Activated CD4-positive, alpha-beta memory T cell treated with anti-CD3 and anti-CD28 coated beads, Interleukin-2, amount 10 ng/mL, durations not matched to agents 7 days and 5 days (primary cell): ENCODE measurements at regions of chr1 and their contacts with region 1.

Region 1: DNA sequence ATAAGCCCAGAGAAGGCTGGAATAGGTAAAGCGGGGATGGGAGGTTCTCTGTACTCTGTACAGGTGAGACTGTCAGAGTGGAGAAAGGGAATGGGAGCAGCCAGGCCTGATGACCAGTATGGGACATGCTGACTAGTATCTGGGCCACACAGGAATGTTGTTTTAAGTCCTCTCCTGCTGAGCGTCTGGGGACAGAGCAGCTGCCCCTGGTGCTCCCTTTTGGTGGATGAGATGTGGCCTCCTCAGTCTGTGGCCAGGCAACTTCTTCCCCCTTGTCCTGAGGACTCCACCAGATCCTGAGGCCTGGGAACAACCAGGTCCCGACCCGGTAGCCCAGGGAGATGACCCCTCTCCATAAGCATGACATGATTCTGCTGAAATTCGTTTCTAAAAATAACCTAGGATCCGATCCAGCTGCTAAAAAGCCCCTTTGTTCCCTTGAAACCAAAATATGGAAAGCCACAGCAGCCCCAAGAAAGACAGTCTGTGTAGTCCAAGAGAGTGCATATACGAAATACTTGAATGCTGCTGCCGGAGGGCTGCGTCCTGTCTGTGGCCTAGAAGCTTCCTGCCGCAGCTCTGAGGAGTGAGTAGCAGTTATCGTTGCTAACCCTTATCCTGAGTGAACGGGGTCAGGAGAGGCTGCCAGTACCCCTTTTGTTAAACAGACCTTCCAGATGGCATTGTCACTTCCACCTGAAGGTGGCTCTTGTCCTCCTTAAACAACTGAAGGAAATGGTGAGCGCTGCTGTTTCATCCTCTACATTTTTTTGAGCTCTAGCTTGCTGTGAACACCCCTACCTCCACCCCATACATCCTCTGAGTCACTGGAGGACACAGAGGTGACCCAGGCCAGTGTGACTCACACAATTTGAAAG is 47.2 kb downstream of the ATP2B4 start:
- DNase-seq: peak; percentile 80
- H3K4me3 Mint-ChIP-seq: peak overlapping the region; percentile 69
- H3K27ac Mint-ChIP-seq: peak overlapping the region; percentile 97
- H3K4me1 Mint-ChIP-seq: peaks cover 75% of the 10 kb centered on the region
- H3K27me3 Mint-ChIP-seq: no peaks in the 10 kb centered on the region

Region 2: DNA sequence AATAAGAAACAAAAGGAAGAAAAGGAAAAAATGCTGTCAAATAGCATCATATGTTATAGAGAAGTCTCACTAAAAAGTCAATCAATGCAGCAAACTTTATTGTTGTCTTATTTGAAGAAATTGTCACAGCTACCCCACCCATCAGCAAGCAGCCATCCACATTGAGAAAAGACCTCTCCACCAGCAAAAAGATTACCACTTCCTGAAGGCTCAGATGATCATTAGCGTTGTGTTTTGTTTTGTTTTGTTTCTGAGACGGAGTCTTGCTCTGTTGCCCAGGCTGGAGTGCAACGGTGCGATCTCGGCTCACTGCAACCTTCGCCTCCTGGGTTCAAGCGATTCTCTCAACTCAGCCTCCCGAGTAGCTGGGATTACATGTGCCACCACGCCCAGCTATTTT is 18.1 kb before region 1 on chr1:
- CTCF ChIA-PET with region 1: interaction called, 34 read pairs
- POLR2A ChIA-PET with region 1: interaction called, 64 read pairs
- DNase-seq: no peak
- H3K4me3 Mint-ChIP-seq: peak overlapping the region; percentile 44
- H3K27ac Mint-ChIP-seq: peak overlapping the region; percentile 77
- H3K4me1 Mint-ChIP-seq: peaks cover 71% of the 10 kb centered on the region
- H3K27me3 Mint-ChIP-seq: no peaks in the 10 kb centered on the region

Region 3: DNA sequence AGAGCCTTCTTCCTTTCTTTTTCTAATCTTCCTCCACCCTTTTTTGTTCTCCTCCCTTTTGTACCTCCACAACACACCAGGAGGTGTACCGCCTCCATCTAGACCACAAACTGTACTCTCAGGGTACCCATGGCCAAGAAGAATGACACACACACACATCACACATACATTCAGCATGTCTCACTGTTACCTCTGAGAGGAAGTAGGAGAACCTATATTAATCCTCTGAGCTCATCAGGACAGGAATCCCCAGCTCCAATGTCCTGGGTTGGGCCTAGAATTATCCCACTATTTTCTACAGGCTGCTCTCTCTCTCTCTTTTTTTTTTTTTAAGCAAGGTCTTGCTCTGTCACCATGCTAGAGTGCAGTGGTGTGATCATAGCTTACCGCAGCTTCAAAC is 10.5 kb before region 1 on chr1:
- CTCF ChIA-PET with region 1: interaction called, 25 read pairs
- POLR2A ChIA-PET with region 1: interaction called, 10 read pairs
- DNase-seq: no peak
- H3K4me3 Mint-ChIP-seq: no peak overlapping the region
- H3K27ac Mint-ChIP-seq: peak overlapping the region; percentile 72
- H3K4me1 Mint-ChIP-seq: peaks cover 68% of the 10 kb centered on the region
- H3K27me3 Mint-ChIP-seq: no peaks in the 10 kb centered on the region

Region 4: DNA sequence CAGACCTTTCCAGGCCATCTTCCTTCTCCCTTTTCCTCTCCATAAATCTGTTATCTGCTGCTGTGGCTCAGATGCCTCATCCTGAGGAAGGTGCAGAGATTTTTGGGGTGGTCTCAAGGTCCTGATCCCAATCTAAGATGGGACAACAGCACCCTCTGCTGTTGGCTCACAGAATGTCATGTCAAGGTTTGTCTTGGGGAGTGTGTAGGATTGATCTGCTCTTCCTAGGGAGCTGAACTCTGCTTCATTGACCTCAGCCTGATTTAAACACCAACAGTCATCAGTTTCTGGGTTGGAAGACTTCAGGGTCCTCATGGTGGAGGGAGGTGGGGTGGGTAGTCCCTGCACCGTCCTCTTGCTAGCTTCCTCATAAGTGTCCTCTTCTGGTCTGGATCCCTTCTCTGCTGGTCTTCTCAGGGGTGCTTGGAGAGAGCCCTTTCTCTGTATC is 28.4 kb after region 1 on chr1:
- CTCF ChIA-PET with region 1: interaction called, 23 read pairs
- POLR2A ChIA-PET with region 1: interaction called, 5 read pairs
- DNase-seq: peak; percentile 65
- H3K4me3 Mint-ChIP-seq: no peak overlapping the region
- H3K27ac Mint-ChIP-seq: peak overlapping the region; percentile 10
- H3K4me1 Mint-ChIP-seq: peaks cover 22% of the 10 kb centered on the region
- H3K27me3 Mint-ChIP-seq: no peaks in the 10 kb centered on the region